ENCODE measurements at regions of chr14 and their contacts with region 1.

Region 1: DNA sequence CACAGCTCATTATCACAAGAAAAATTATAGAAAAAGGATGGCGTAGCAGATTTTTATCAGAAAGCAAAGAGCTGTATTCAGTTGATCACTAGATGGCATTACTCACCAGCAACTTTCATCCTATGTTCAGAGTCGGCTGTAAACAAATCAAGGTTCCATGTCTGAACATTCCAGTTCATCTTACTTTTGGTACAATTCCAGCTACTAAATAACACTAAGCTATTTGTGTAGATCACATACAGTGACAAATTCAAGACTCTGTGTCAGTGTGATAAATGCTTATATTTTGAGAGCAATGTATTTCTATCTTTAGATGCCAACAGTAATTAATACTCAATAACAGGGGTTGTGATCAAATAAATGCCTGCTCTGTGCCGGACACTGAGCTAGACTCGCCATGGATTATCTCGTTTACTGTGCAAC is 30.1 kb downstream of the NRDE2 start:
- DNase-seq: peak; percentile 30
- ATAC-seq: peak; percentile 42; the same call in 2 of the 3 replicates
- H3K4me3 ChIP-seq: no peak overlapping the region
- H3K27ac ChIP-seq: no peak overlapping the region
- H3K4me1 ChIP-seq: peaks cover 48% of the 10 kb centered on the region
- H3K27me3 ChIP-seq: no peaks in the 10 kb centered on the region
- CTCF ChIP-seq: peak; percentile 66
- EP300 ChIP-seq: no peak
- POLR2A ChIP-seq: no peak
- RAD21 ChIP-seq: peak; percentile 57

Region 2: DNA sequence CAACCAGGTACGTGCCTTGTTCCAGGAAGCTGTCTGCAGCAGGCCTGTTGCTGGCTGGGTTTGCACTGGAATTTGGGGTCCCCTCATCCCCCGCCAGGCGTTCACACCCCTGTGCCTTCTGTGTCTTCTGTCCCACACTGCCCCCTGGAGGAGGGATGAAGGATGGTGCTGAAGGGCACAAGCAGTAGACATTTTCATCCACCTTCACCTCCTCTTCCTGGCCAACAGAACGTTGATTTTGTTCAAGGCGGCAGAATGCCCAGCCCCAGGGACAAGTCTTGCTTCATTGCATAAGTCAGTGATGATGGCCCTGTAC is 217.2 kb after region 1 on chr14:
- CTCF ChIA-PET with region 1: interaction called, 3 read pairs
- POLR2A ChIA-PET with region 1: interaction called, 4 read pairs
- in situ Hi-C with region 1: loop called (anchors 10 kb)
- intact Hi-C with region 1: loop called (anchors 2 kb)
- DNase-seq: peak; percentile 53
- ATAC-seq: peak; percentile 63
- H3K4me3 ChIP-seq: no peak overlapping the region
- H3K27ac ChIP-seq: no peak overlapping the region
- H3K4me1 ChIP-seq: peaks cover 52% of the 10 kb centered on the region
- H3K27me3 ChIP-seq: peaks cover 3 to 5% of the 10 kb centered on the region in 2 experiments; a peak in 1 of 5 replicates
- CTCF ChIP-seq: peak; percentile 90
- EP300 ChIP-seq: no peak
- POLR2A ChIP-seq: no peak
- RAD21 ChIP-seq: peak; percentile 75

Region 3: GRCh38 chr14:90697577-90698206 is 396.0 kb after region 1 on chr14:
- CTCF ChIA-PET with region 1: interaction called, 9 read pairs
- POLR2A ChIA-PET with region 1: no interaction called
- in situ Hi-C with region 1: loop called (anchors 5 kb)
- intact Hi-C with region 1: no loop called
- DNase-seq: peak; percentile 61
- ATAC-seq: peak; percentile 95
- H3K4me3 ChIP-seq: no peak overlapping the region
- H3K27ac ChIP-seq: no peak overlapping the region
- H3K4me1 ChIP-seq: no peaks in the 10 kb centered on the region
- H3K27me3 ChIP-seq: no peaks in the 10 kb centered on the region
- CTCF ChIP-seq: peak; percentile 93
- EP300 ChIP-seq: no peak
- POLR2A ChIP-seq: no peak
- RAD21 ChIP-seq: peak; percentile 89

Region 4: DNA sequence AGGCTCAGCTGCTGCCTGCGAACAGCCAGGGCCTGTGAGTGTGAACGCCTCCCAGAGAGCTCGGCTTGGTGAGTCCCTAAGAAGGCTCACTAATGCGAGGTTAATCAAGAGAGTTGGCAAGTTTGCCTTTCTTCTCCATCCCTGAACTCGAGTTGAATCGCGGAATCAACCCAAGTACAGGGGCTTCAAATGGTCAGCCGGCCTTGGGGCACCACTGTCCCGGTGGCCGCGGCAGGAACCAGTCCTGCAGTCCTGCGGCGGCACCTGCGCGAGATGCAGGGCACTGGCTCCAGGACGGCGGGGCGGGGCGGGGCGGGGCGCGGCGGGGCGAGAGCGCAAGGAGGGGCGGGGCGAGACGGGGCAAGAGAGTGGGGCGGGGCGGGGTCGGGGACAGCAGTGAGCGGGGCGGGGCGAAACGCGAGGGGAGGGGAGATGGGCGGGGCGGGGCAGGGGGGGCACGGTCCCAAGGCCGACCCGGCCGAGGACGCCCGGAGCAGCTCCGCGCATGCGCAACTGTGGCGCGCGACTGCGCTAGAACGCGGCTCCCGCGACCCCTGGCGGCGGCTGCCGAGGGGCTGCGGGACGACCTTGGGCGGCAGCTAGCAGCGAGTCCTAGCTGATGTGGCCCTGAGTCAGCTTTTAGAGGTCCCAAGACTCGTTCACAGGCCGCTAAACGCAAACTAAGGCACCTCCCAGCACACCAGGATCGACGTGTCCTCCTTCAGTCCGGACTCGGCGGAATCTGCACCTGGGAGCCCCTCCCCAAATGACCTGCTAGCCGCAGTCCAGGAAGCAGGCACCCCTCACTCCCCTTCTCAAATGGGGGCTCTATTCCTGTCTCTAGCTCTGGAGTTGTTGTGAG is 456.6 kb after region 1 on chr14:
- CTCF ChIA-PET with region 1: no interaction called
- POLR2A ChIA-PET with region 1: no interaction called
- in situ Hi-C with region 1: no loop called
- intact Hi-C with region 1: loop called (anchors 5 kb)
- DNase-seq: peak; percentile 79
- ATAC-seq: peak; percentile 95
- H3K4me3 ChIP-seq: peak overlapping the region; percentile 53 to 85 (median 63); a peak in 5 of 6 replicates
- H3K27ac ChIP-seq: peak overlapping the region; percentile 59
- H3K4me1 ChIP-seq: peaks cover 15% of the 10 kb centered on the region
- H3K27me3 ChIP-seq: no peaks in the 10 kb centered on the region
- CTCF ChIP-seq: peak; percentile 92
- EP300 ChIP-seq: no peak
- POLR2A ChIP-seq: peak; percentile 57 to 64
- RAD21 ChIP-seq: peak; percentile 78